ENCODE measurements at regions of chr9 and their contacts with region 1.

Region 1: DNA sequence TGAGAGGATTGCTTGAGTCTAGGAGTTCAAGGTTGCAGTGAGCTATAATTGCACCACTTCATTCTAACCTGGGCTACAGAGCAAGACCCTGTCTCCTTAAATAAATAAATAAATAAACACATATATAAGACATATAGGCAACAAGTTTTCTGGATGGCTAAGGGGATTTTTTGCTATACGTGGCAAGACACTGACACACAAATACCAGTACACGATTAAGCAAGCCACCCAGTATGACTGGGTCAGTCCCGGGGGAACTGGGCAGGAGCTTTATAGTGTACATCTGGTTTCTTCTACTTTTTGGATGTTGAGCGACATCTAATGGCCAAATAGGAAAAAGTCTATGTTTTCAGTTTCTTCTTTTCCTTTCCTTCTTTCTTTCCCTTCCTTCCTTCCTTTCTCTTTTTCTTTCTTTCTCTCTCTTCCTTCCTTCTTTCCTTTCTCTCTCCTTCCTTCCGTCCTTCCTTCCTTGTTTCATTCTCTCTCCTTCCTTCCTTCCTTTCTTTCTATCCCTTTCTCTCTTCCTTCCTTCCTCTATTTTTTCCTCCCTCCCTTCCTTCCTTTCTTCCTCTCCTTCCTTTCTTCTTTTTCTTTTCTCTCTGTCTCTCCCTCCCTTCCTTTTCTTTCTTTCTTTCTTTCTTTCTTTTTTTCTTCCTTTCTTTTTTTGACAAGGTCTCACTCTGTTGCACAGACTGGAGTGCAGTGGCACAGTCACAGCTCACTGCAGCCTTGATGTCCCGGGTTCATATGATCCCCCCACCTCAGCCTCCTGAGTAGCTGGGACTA is 47.0 kb upstream of the PLIN2 start:
- DNase-seq: peak; percentile 77
- CTCF ChIP-seq: peak; percentile 47

Region 2: GRCh38 chr9:19085295-19085694 is 89.0 kb before region 1 on chr9:
- CTCF ChIA-PET with region 1: interaction called, 35 read pairs
- POLR2A ChIA-PET with region 1: no interaction called
- DNase-seq: peak; percentile 32
- CTCF ChIP-seq: peak; percentile 16

Region 3: DNA sequence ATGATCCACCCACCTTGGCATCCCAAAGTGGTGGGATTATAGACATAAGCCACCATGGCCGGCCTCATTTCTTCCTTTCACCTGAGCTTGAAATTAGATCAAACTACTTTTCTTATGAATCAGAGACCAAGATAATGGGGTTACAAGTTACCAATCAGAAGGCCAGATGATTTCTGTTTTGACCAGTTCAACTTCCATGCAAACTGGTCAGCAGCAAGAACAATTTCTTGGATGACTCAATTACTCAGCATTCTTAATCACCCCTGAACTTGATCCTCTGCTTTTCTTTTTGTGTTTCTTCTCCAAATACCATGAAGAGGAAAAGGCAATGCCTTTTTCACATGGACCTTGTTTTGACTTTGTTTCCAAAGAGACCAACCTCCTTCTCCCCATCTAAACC is 37.0 kb before region 1 on chr9:
- CTCF ChIA-PET with region 1: interaction called, 27 read pairs
- POLR2A ChIA-PET with region 1: interaction called, 3 read pairs
- DNase-seq: no peak
- CTCF ChIP-seq: no peak

Region 4: DNA sequence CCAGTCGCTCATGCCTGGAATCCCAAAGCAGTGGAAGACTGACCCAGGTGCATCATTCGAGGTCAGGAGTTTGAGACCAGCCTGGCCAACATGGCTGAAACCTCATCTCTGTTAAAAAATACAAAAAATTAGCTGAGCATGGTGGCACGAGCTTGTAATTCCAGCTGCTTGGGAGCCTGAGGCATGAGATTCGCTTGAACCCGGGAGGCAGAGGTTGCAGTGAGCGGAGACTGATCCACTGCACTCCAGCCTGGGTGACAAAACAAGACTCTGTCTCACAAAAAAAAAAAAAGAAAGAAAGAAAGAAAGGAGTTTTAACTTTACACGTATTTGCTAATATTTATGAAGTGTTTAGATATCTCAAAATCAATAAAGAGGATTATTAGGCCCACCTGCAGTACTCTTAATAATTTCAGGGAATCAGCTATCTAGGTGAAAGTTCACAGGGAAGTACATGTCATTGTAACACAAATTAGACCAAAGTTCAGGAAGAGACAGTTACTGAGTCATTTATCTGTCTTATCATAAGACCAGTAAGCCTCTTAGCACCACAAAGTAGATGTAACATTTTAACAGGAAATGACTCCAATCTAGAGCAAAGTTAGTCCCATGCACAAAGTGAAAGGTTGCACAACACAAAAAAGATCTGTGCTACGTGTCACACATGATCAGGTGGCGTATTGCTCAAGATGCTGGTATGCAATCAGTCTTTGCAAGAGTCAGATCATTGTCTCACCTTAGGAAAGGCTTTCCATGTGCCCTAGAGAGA is 12.9 kb before region 1 on chr9:
- CTCF ChIA-PET with region 1: interaction called, 26 read pairs
- POLR2A ChIA-PET with region 1: no interaction called
- DNase-seq: peak; percentile 35
- CTCF ChIP-seq: no peak

Region 5: GRCh38 chr9:19230356-19231125 is 56.2 kb after region 1 on chr9 and contains the start of gene DENND4C:
- CTCF ChIA-PET with region 1: no interaction called
- POLR2A ChIA-PET with region 1: no interaction called
- DNase-seq: peak; percentile 89
- CTCF ChIP-seq: peak; percentile 34

Region 6: DNA sequence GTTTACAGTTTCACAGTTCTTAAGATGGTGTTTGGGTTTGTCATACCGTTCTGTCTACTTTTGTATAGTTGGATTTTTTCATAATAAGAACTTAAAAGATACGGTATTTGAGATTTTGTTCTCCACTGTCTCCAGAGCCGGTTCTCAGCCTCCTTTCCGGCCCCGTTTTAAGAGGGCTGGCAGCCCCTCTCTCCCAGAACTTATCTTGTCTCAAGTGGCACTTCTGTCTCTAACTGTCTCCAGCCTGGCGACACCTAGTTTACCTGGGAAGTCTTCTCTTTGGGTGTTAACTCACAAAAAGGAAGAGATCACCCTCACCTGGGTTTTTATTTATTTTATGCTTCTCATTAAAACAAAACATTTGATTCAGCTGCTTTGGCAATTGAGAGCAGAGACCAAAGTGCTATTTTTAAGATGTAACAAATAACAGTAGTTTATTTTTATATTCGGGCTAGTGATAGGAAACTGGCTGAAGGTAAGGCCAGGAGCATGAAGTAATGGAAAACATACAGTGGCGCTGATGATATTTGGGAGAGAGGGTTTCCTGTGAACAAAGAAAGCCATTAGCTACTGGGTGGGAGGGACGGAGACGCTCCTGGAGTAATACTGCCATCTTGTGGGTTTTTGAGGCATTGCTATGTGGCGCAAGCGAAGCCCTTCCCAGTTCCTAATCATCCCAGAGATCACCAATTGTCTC is 282.8 kb after region 1 on chr9:
- CTCF ChIA-PET with region 1: interaction called, 10 read pairs
- POLR2A ChIA-PET with region 1: no interaction called
- DNase-seq: peak; percentile 70
- CTCF ChIP-seq: peak; percentile 87

Measured in GM10248 (cell line).